ENCODE measurements at regions of chr18 and their contacts with region 1.

Region 1: GRCh38 chr18:28995319-28995718 is 818.4 kb upstream of the CDH2 start:
- DNase-seq: no peak
- H3K4me3 ChIP-seq: no peak overlapping the region
- H3K27ac ChIP-seq: no peak overlapping the region
- H3K4me1 ChIP-seq: no peaks in the 10 kb centered on the region
- H3K27me3 ChIP-seq: no peaks in the 10 kb centered on the region
- CTCF ChIP-seq: peak; percentile 46 to 62

Region 2: GRCh38 chr18:28905509-28905908 is 89.8 kb before region 1 on chr18:
- CTCF ChIA-PET with region 1: no interaction called
- dilution Hi-C with region 1: no loop called
- in situ Hi-C with region 1: no loop called
- intact Hi-C with region 1: no loop called
- DNase-seq: peak; percentile 58
- H3K4me3 ChIP-seq: no peak overlapping the region
- H3K27ac ChIP-seq: no peak overlapping the region
- H3K4me1 ChIP-seq: peaks cover 4% of the 10 kb centered on the region
- H3K27me3 ChIP-seq: no peaks in the 10 kb centered on the region
- CTCF ChIP-seq: no peak

Region 3: GRCh38 chr18:29418136-29418535 is 422.8 kb after region 1 on chr18:
- CTCF ChIA-PET with region 1: no interaction called
- dilution Hi-C with region 1: no loop called
- in situ Hi-C with region 1: no loop called
- intact Hi-C with region 1: loop called (anchors 1 kb)
- DNase-seq: peak; percentile 83
- H3K4me3 ChIP-seq: no peak overlapping the region
- H3K27ac ChIP-seq: no peak overlapping the region
- H3K4me1 ChIP-seq: peaks cover 2% of the 10 kb centered on the region
- H3K27me3 ChIP-seq: no peaks in the 10 kb centered on the region
- CTCF ChIP-seq: no peak

Measured in mammary epithelial cell (primary cell).